ENCODE measurements at regions of chr1 and their contacts with region 1.

Region 1: GRCh38 chr1:159798893-159799292 is 3.3 kb upstream of the FCRL6 start:
- DNase-seq: no peak
- H3K4me3 Mint-ChIP-seq: no peak overlapping the region
- H3K27ac Mint-ChIP-seq: no peak overlapping the region
- H3K4me1 Mint-ChIP-seq: peaks cover 11% of the 10 kb centered on the region
- H3K27me3 Mint-ChIP-seq: peaks cover 44% of the 10 kb centered on the region

Region 2: DNA sequence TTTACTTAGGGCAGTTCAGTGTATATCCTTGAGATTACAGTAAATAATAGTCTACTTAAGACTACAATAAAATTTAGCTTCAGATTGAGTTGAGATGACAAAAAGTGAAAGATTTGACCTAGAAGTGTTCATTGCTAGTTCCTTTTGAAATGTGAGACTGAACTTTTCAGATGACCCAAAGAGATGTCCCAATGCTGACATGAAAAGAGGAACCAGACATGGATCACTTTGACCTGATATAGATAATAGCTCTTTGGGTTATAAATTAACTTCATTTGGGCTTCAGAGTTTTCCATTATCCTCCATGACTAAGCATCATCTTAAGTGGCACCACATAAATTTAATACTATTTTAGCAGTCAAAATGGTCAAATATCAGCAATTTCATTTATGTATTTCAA is 237.4 kb before region 1 on chr1:
- intact Hi-C with region 1: no loop called
- DNase-seq: no peak
- H3K4me3 Mint-ChIP-seq: no peak overlapping the region
- H3K27ac Mint-ChIP-seq: no peak overlapping the region
- H3K4me1 Mint-ChIP-seq: no peaks in the 10 kb centered on the region
- H3K27me3 Mint-ChIP-seq: no peaks in the 10 kb centered on the region

Region 3: DNA sequence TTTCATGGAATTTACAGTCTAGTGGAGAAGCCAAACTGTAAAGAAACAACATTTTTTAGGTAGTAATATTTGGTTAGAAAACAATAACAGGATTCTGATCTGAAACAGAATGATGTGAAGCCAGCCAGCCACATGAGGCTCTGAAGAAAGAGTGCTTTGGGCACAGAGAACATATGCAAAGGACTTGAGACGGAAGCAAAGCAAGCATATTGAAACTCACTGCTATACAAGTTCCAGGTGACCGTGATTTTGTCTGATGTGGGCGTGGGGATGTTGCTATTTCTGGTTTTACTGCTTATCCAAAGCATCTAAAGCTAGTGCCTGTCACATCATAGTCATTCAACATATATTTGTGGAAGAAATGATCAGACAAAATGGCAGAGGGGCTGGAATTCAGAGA is 99.2 kb before region 1 on chr1:
- intact Hi-C with region 1: no loop called
- DNase-seq: no peak
- H3K4me3 Mint-ChIP-seq: no peak overlapping the region
- H3K27ac Mint-ChIP-seq: no peak overlapping the region
- H3K4me1 Mint-ChIP-seq: no peaks in the 10 kb centered on the region
- H3K27me3 Mint-ChIP-seq: no peaks in the 10 kb centered on the region

Region 4: GRCh38 chr1:159780583-159781582 is 18.0 kb before region 1 on chr1 and contains the start of gene DUSP23:
- intact Hi-C with region 1: no loop called
- DNase-seq: peak; percentile 96
- H3K4me3 Mint-ChIP-seq: peak within 1 kb of the TSS; percentile 73
- H3K27ac Mint-ChIP-seq: peak within 1 kb of the TSS; percentile 39
- H3K4me1 Mint-ChIP-seq: peaks cover 7% of the 10 kb centered on the region
- H3K27me3 Mint-ChIP-seq: peaks cover 18% of the 10 kb centered on the region
- total RNA-seq, gene DUSP23: 26.2 and 32.6 TPM in 2 replicates

Region 5: DNA sequence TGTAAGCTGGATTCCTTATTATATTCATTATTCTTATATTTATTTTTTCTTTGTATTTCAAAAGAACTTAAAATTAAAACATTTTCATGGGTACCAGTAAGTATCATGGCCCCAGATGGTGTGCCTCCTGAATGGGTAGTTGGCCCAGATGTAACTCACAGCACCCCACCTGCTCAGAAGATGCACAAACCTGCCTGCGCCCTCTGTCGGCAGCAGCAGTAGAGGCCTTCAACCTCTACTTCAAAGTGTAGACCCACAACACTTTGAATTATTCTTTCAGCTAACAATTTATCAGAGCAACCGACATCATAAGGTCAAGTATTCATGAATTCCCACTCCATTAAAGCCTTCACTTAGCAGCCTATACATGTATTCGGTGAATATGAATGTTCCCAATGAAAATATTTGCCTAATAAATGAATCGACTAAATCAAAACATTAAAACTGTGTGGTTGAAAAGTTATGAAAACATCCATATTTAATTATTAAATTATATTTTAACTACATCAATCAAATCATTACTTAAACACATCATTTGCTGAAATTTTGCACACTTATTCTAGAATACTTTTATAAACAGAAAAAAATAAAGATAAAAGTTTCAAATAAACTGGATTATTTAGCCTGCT is 207.5 kb after region 1 on chr1:
- intact Hi-C with region 1: loop called (anchors 1 kb)
- DNase-seq: peak; percentile 63
- H3K4me3 Mint-ChIP-seq: no peak overlapping the region
- H3K27ac Mint-ChIP-seq: no peak overlapping the region
- H3K4me1 Mint-ChIP-seq: no peaks in the 10 kb centered on the region
- H3K27me3 Mint-ChIP-seq: peaks cover 2% of the 10 kb centered on the region